Colonic mucosa (tissue), 4 donors: ENCODE measurements at regions of chr2 and their contacts with region 1.

Region 1: DNA sequence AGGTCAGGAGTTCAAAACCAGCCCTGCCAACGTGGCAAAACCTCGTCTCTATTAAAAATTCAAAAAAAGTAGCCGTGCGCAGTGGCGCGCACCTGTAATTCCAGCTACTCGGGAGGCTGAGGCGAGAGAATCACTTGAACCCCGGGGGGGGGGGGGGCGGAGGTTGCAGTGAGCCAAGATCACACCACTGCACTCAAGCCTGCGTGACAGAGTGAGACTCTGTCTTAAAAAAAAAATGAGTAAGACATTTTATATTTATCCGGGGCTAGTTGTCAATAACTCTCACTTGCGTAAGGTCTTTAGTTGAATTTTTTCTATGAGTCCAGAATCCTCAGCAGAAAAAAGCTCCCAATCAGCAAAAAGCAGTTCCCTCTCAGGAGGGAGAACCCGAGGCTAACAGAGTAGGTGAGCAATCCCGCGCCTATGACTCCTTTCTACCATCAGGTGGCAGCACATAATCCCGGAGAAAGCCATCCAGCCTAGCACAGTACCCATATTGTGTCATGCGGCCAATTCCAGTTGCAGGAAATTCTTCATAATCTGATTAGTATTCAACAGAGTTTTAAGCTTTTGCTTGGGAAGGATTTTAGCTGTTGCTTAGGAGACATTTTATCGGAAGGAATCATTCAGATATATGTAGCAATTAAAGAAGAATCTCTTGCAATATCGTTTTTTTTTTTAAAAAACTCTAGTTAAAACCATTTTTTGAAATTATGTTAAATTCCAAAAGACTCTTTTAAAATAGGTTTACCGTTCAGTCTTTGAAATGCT is 11.9 kb upstream of the CRYGA start:
- DNase-seq: peak; percentile 81
- H3K4me3 ChIP-seq: no peak overlapping the region
- H3K27ac ChIP-seq: no peak overlapping the region
- H3K4me1 ChIP-seq: no peaks in the 10 kb centered on the region
- H3K27me3 ChIP-seq: no peaks in the 10 kb centered on the region
- CTCF ChIP-seq: peak; percentile 76

Region 2: GRCh38 chr2:208254871-208255556 is 79.8 kb after region 1 on chr2 and contains the start of gene IDH1:
- intact Hi-C with region 1: loop called (anchors 2 kb)
- DNase-seq: peak; percentile 100
- H3K4me3 ChIP-seq: peak within 1 kb of the TSS; percentile 95
- H3K27ac ChIP-seq: peak within 1 kb of the TSS; percentile 90
- H3K4me1 ChIP-seq: peaks cover 5% of the 10 kb centered on the region
- H3K27me3 ChIP-seq: no peaks in the 10 kb centered on the region
- CTCF ChIP-seq: peak; percentile 35
- total RNA-seq, gene IDH1: 250 to 348 TPM

Region 3: GRCh38 chr2:208346756-208347155 is 171.5 kb after region 1 on chr2:
- intact Hi-C with region 1: loop called (anchors 10 kb)
- DNase-seq: no peak
- H3K4me3 ChIP-seq: no peak overlapping the region
- H3K27ac ChIP-seq: no peak overlapping the region
- H3K4me1 ChIP-seq: no peaks in the 10 kb centered on the region
- H3K27me3 ChIP-seq: no peaks in the 10 kb centered on the region
- CTCF ChIP-seq: no peak